Ascending aorta (tissue), 2 donors: ENCODE measurements at regions of chr17 and their contacts with region 1.

Region 1: DNA sequence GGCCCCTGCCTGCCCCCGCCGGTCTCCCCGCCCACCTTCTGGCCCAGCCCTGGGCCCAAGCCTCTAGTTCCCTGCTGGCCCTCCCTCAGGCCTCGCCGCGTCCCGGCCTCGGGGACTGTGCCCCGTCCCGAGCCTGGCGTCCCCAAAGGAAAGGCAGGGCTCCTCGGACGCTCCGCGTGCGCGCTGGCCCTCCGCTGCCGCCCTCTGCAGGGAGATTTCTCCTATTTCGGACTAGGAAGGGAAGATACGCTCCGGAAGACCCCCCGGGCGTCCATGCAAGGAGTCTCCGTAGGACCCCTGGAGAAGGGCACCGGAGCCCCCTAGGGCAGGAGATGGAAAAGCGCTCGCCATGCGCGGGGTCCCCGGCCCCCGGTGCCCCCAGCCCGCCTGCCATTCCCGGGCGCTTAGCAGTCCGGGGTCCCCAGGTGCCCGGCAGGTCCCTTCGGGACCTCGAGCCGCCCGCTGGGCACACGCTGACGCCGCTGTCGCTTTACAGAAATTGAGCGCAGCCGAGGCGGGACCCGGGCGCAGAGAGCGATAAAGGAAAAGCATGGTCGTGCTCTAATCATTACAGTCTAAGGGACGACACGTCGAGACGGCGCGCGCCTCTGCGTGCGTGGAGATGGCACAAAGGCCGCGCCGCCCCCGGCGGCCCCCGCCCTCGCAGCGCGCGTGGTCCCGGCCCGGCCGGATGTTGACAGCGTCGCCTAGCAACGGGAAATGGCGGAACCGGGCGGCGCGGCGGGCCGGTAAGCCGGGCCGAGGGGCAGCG is at the start of gene CCDC40:
- DNase-seq: peak in 1 of 2 donors; percentile 90
- H3K4me3 ChIP-seq: peak within 1 kb of the TSS; percentile 91 to 98
- H3K27ac ChIP-seq: peak within 1 kb of the TSS; percentile 91 to 95
- H3K4me1 ChIP-seq: peaks cover 4 to 9% of the 10 kb centered on the region in 2 donors
- H3K27me3 ChIP-seq: no peaks in the 10 kb centered on the region
- CTCF ChIP-seq: no peak
- total RNA-seq, gene CCDC40: 5.4 TPM

Region 2: GRCh38 chr17:80008383-80008840 is 27.7 kb before region 1 on chr17:
- intact Hi-C with region 1: loop called (anchors 1 kb)
- DNase-seq: peak in 1 of 2 donors; percentile 86
- H3K4me3 ChIP-seq: no peak overlapping the region
- H3K27ac ChIP-seq: no peak overlapping the region
- H3K4me1 ChIP-seq: peaks cover 0 to 9% of the 10 kb centered on the region in 2 donors
- H3K27me3 ChIP-seq: no peaks in the 10 kb centered on the region
- CTCF ChIP-seq: peak; percentile 95 to 97 (median 95)

Region 3: GRCh38 chr17:80101011-80101945 is 65.1 kb after region 1 on chr17 and contains the start of gene GAA:
- intact Hi-C with region 1: loop called (anchors 5 kb)
- DNase-seq: peak; percentile 24 to 89
- H3K4me3 ChIP-seq: peak within 1 kb of the TSS; percentile 80 to 98
- H3K27ac ChIP-seq: peak within 1 kb of the TSS; percentile 81 to 93
- H3K4me1 ChIP-seq: peaks cover 3 to 7% of the 10 kb centered on the region in 2 donors
- H3K27me3 ChIP-seq: no peaks in the 10 kb centered on the region
- CTCF ChIP-seq: peak; percentile 41 to 95 (median 66)
- total RNA-seq, gene GAA: 91.6 TPM